Sigmoid colon (tissue), 7 donors: ENCODE measurements at regions of chr21 and their contacts with region 1.

Region 1: DNA sequence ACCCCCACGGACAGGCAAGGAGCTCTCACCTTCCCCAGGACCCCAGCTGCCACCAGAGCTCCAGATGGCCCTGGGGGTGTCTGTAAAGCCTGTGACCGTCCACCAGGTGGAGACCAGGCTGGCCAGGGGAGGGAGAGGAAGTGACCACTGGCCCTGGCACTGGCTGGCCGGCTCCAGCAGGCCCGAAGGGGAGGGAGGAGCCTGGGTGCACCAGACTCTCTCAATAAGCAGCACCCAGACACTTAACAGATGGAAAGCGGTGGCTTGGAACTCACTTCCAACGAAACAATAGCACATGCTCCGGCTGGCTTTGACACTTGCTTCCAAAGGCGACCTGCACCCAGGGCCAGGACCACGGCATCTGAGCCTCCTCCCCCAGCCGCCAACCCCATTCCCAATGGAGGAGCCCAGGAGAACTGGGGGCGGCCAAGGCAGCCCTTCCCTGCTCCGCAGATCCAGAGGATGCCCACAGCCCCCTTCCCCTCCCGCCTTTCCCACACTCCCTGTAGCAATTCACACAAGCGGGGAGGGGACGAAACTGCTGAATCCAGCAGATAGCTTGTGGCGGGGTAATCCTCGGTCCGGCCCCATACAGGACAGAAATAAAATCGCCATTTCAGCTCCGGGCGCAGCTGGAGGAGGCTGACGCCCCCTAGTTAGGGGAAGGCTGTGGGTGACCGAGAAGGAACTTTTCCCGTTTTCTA is 742 bp upstream of the PDE9A start:
- DNase-seq: peak; percentile 92
- H3K4me3 ChIP-seq: peak overlapping the region; percentile 45 to 86 (median 82)
- H3K27ac ChIP-seq: peak overlapping the region; percentile 75 to 95 (median 90)
- H3K4me1 ChIP-seq: peaks cover 0 to 54% (median 46%) of the 10 kb centered on the region in 4 donors
- H3K27me3 ChIP-seq: peaks cover 0 to 7% (median 0%) of the 10 kb centered on the region in 3 donors
- CTCF ChIP-seq: peak; percentile 52 to 69 (median 56)
- EP300 ChIP-seq: no peak
- POLR2A ChIP-seq: no peak

Region 2: GRCh38 chr21:42674351-42674940 is 21.8 kb after region 1 on chr21:
- intact Hi-C with region 1: loop called (anchors 2 kb)
- DNase-seq: peak; percentile 95
- H3K4me3 ChIP-seq: peak overlapping the region; percentile 8 to 32 (median 28)
- H3K27ac ChIP-seq: peak overlapping the region; percentile 71 to 85 (median 82)
- H3K4me1 ChIP-seq: peaks cover 0 to 81% (median 68%) of the 10 kb centered on the region in 4 donors
- H3K27me3 ChIP-seq: no peaks in the 10 kb centered on the region
- CTCF ChIP-seq: no peak
- EP300 ChIP-seq: no peak
- POLR2A ChIP-seq: no peak

Region 3: GRCh38 chr21:42705746-42706374 is 53.2 kb after region 1 on chr21:
- intact Hi-C with region 1: no loop called
- DNase-seq: peak; percentile 76
- H3K4me3 ChIP-seq: no peak overlapping the region
- H3K27ac ChIP-seq: peak overlapping the region in 3 of 4 donors; percentile 53 to 73 (median 70)
- H3K4me1 ChIP-seq: peaks cover 0 to 12% (median 6%) of the 10 kb centered on the region in 4 donors
- H3K27me3 ChIP-seq: no peaks in the 10 kb centered on the region
- CTCF ChIP-seq: peak in 1 of 4 experiments; percentile 15
- EP300 ChIP-seq: no peak
- POLR2A ChIP-seq: no peak

Region 4: GRCh38 chr21:42724226-42724920 is 71.7 kb after region 1 on chr21:
- intact Hi-C with region 1: loop called (anchors 5 kb)
- DNase-seq: no peak
- H3K4me3 ChIP-seq: no peak overlapping the region
- H3K27ac ChIP-seq: peak overlapping the region; percentile 36 to 75 (median 59)
- H3K4me1 ChIP-seq: peaks cover 0 to 28% (median 24%) of the 10 kb centered on the region in 4 donors
- H3K27me3 ChIP-seq: no peaks in the 10 kb centered on the region
- CTCF ChIP-seq: no peak
- EP300 ChIP-seq: no peak
- POLR2A ChIP-seq: no peak

Region 5: GRCh38 chr21:42744520-42745445 is 92.1 kb after region 1 on chr21:
- intact Hi-C with region 1: loop called (anchors 1 kb)
- DNase-seq: peak; percentile 58
- H3K4me3 ChIP-seq: no peak overlapping the region
- H3K27ac ChIP-seq: peak overlapping the region in 3 of 4 donors; percentile 79 to 84 (median 84)
- H3K4me1 ChIP-seq: peaks cover 0 to 63% (median 47%) of the 10 kb centered on the region in 4 donors
- H3K27me3 ChIP-seq: no peaks in the 10 kb centered on the region
- CTCF ChIP-seq: no peak
- EP300 ChIP-seq: no peak
- POLR2A ChIP-seq: no peak